ENCODE measurements at regions of chr10 and their contacts with region 1.

Region 1: GRCh38 chr10:70540089-70540788 is 61.7 kb downstream of the PALD1 start:
- DNase-seq: peak; percentile 73
- H3K4me3 Mint-ChIP-seq: no peak overlapping the region
- H3K27ac Mint-ChIP-seq: no peak overlapping the region
- H3K4me1 Mint-ChIP-seq: no peaks in the 10 kb centered on the region
- H3K27me3 Mint-ChIP-seq: peaks cover 6% of the 10 kb centered on the region

Region 2: GRCh38 chr10:70461215-70461986 is 78.8 kb before region 1 on chr10:
- intact Hi-C with region 1: loop called (anchors 1 kb)
- DNase-seq: peak; percentile 82
- H3K4me3 Mint-ChIP-seq: no peak overlapping the region
- H3K27ac Mint-ChIP-seq: no peak overlapping the region
- H3K4me1 Mint-ChIP-seq: no peaks in the 10 kb centered on the region
- H3K27me3 Mint-ChIP-seq: peaks cover 48% of the 10 kb centered on the region

Region 3: GRCh38 chr10:70551971-70552422 is 11.8 kb after region 1 on chr10:
- intact Hi-C with region 1: no loop called
- DNase-seq: no peak
- H3K4me3 Mint-ChIP-seq: no peak overlapping the region
- H3K27ac Mint-ChIP-seq: no peak overlapping the region
- H3K4me1 Mint-ChIP-seq: no peaks in the 10 kb centered on the region
- H3K27me3 Mint-ChIP-seq: no peaks in the 10 kb centered on the region

Measured in activated CD4-positive, alpha-beta T cell treated with anti-CD3 and anti-CD28 coated beads, Interleukin-2, amount 10 ng/mL, durations not matched to agents 24 days and 14 days (primary cell).